ENCODE measurements at regions of chr2 and their contacts with region 1.

Region 1: GRCh38 chr2:232315049-232315922 is 63.3 kb upstream of the ALPP start:
- DNase-seq: peak; percentile 95 to 98 (median 96)
- H3K4me3 ChIP-seq: peak overlapping the region in 1 of 3 experiments; percentile 19
- H3K4me3 Mint-ChIP-seq: peak overlapping the region; percentile 56 to 72
- H3K27ac ChIP-seq: peak overlapping the region; percentile 95 to 99
- H3K27ac Mint-ChIP-seq: peak overlapping the region; percentile 98 to 100 (median 98)
- H3K4me1 ChIP-seq: peaks cover 65 to 66% of the 10 kb centered on the region in 2 donors
- H3K4me1 Mint-ChIP-seq: peaks cover 66% of the 10 kb centered on the region
- H3K27me3 ChIP-seq: no peaks in the 10 kb centered on the region
- H3K27me3 Mint-ChIP-seq: peaks cover 0 to 1% (median 0%) of the 10 kb centered on the region in 3 donors
- CTCF ChIP-seq: peak; percentile 75

Region 2: GRCh38 chr2:232042911-232043564 is 272.2 kb before region 1 on chr2:
- intact Hi-C with region 1: no loop called
- DNase-seq: no peak
- H3K4me3 ChIP-seq: no peak overlapping the region
- H3K4me3 Mint-ChIP-seq: no peak overlapping the region
- H3K27ac ChIP-seq: no peak overlapping the region
- H3K27ac Mint-ChIP-seq: no peak overlapping the region
- H3K4me1 ChIP-seq: no peaks in the 10 kb centered on the region
- H3K4me1 Mint-ChIP-seq: no peaks in the 10 kb centered on the region
- H3K27me3 ChIP-seq: no peaks in the 10 kb centered on the region
- H3K27me3 Mint-ChIP-seq: no peaks in the 10 kb centered on the region
- CTCF ChIP-seq: no peak

Region 3: DNA sequence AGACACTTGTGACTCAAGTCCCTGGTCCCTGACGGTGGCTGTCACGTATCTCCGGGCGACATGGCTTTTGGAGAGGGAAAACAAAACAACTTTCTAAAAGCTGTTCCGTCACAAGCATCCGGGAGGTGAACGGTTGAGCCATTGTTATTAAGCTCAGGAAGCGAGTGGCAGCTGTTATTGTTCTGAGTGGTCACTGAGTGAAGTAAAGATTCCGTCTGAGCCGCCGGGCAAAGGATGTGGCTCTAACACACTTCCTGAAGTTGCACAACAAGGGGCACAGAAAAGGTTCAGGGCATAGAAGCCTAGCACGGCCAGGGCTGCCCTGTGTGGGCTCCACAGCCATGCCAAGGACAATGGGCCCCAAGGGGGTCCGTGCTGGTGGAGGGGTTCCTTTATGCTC is 769.2 kb after region 1 on chr2:
- intact Hi-C with region 1: loop called in 1 of 2 experiments (anchors 10 kb)
- DNase-seq: peak; percentile 87 to 98 (median 90)
- H3K4me3 ChIP-seq: peak overlapping the region in 1 of 3 experiments; percentile 55
- H3K4me3 Mint-ChIP-seq: peak overlapping the region; percentile 69 to 85
- H3K27ac ChIP-seq: peak overlapping the region; percentile 90 to 95
- H3K27ac Mint-ChIP-seq: peak overlapping the region; percentile 97 to 100 (median 99)
- H3K4me1 ChIP-seq: peaks cover 99 to 100% of the 10 kb centered on the region in 2 donors
- H3K4me1 Mint-ChIP-seq: peaks cover 97% of the 10 kb centered on the region
- H3K27me3 ChIP-seq: no peaks in the 10 kb centered on the region
- H3K27me3 Mint-ChIP-seq: peaks cover 0 to 1% (median 0%) of the 10 kb centered on the region in 3 donors
- CTCF ChIP-seq: no peak